Gastrocnemius medialis (tissue), 4 donors: ENCODE measurements at regions of chr2 and their contacts with region 1.

Region 1: DNA sequence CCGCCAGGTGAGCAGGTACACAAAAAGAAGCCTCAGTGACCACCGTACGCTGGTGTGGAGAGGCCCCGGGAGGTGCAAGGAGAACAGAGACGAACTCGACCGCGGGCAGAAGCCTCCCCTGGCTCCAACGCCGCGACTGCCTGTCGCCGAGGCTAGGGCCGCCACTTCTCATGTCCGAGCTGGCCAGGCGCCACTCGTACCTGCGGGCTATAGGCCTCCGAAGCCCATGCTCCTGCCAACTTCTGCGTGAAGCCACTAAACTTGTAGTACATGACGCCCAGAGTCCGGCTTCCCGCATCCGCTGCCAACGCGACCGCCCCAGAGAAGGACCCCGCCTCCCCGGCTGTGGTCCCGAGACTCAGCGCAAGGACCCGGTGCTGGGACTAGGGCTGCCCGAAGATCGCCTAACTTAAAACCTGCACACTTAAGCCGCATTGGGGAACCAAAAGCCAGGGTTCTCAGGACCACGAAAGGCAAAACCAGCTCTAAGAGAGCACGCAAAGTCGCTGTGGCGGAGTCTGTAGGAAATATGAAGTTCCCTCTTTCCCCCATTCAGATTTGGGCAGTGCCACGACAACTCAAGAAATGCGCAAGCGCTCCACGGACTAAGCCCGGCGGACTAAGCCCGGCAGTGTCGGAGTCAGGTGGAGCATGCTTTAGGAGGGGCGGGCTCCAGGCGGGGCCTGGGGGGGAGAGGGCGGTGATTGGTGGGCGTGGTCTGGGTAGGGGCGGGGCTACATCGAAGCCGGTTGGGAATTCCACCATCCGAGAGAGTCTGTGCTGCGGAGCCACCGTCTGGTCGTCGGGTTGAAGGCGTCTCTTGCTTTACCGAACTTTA is at the start of gene COX7A2L:
- DNase-seq: peak; percentile 96
- ATAC-seq: peak; percentile 95 to 97
- H3K4me3 ChIP-seq: peak within 1 kb of the TSS; percentile 86 to 99 (median 97)
- H3K27ac ChIP-seq: peak within 1 kb of the TSS; percentile 97 to 99 (median 98)
- H3K4me1 ChIP-seq: peaks cover 31 to 36% of the 10 kb centered on the region in 2 donors
- H3K27me3 ChIP-seq: no peaks in the 10 kb centered on the region
- CTCF ChIP-seq: peak in 3 of 5 experiments; percentile 3 to 58 (median 43)
- POLR2A ChIP-seq: peak; percentile 85 to 91
- total RNA-seq, gene COX7A2L: 69.8 to 94.7 (median 89.1) TPM

Region 2: DNA sequence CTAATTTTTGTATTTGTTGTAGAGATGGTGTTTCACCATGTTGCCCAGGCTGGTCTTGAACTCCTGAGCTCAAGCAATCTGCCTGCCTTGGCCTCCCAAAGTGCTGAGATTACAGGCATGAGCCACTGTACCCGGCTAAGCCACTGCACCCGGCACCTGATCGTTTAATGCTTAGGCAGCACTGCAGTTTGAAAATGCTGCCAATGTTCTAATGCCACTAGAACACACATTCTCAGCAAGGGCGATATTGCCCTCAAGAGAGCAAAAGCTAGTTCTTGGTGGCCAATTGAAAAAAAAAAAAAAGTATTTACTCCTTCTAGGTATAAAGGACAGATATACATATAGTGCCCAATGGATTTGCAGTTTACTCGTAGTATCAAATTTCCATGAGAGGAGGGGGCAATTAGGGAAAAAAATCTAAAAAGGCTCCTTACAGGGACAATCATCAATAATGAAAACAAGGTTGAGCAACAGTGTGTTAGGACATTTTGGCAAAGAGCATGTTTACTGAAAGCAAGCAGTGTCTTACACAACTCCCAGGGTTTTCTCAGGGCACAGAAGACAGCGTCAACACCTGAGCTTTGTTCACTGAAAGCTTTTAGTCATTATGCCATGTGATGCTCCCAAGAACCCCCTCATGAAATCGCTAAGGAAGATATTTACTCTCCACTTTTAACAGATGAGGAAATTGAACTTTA is 513.2 kb before region 1 on chr2:
- in situ Hi-C with region 1: loop called (anchors 10 to 25 kb)
- intact Hi-C with region 1: loop called (anchors 1 kb)
- DNase-seq: peak; percentile 76 to 82
- ATAC-seq: peak; percentile 85 to 92
- H3K4me3 ChIP-seq: no peak overlapping the region
- H3K27ac ChIP-seq: peak overlapping the region; percentile 83 to 93 (median 90)
- H3K4me1 ChIP-seq: peaks cover 23% of the 10 kb centered on the region in 2 donors
- H3K27me3 ChIP-seq: no peaks in the 10 kb centered on the region
- CTCF ChIP-seq: no peak
- POLR2A ChIP-seq: no peak

Region 3: GRCh38 chr2:41928526-41928925 is 432.6 kb before region 1 on chr2:
- in situ Hi-C with region 1: no loop called
- intact Hi-C with region 1: loop called (anchors 5 kb)
- DNase-seq: no peak
- ATAC-seq: no peak
- H3K4me3 ChIP-seq: no peak overlapping the region
- H3K27ac ChIP-seq: peak overlapping the region; percentile 89 to 98 (median 98)
- H3K4me1 ChIP-seq: peaks cover 75 to 83% of the 10 kb centered on the region in 2 donors
- H3K27me3 ChIP-seq: no peaks in the 10 kb centered on the region
- CTCF ChIP-seq: no peak
- POLR2A ChIP-seq: no peak

Region 4: GRCh38 chr2:42095923-42096408 is 265.1 kb before region 1 on chr2:
- in situ Hi-C with region 1: loop called (anchors 5 to 10 kb)
- intact Hi-C with region 1: loop called (anchors 1 kb)
- DNase-seq: peak in 1 of 2 donors; percentile 45
- ATAC-seq: peak; percentile 61 to 66
- H3K4me3 ChIP-seq: no peak overlapping the region
- H3K27ac ChIP-seq: no peak overlapping the region
- H3K4me1 ChIP-seq: no peaks in the 10 kb centered on the region
- H3K27me3 ChIP-seq: no peaks in the 10 kb centered on the region
- CTCF ChIP-seq: peak; percentile 80 to 85 (median 81)
- POLR2A ChIP-seq: no peak

Region 5: DNA sequence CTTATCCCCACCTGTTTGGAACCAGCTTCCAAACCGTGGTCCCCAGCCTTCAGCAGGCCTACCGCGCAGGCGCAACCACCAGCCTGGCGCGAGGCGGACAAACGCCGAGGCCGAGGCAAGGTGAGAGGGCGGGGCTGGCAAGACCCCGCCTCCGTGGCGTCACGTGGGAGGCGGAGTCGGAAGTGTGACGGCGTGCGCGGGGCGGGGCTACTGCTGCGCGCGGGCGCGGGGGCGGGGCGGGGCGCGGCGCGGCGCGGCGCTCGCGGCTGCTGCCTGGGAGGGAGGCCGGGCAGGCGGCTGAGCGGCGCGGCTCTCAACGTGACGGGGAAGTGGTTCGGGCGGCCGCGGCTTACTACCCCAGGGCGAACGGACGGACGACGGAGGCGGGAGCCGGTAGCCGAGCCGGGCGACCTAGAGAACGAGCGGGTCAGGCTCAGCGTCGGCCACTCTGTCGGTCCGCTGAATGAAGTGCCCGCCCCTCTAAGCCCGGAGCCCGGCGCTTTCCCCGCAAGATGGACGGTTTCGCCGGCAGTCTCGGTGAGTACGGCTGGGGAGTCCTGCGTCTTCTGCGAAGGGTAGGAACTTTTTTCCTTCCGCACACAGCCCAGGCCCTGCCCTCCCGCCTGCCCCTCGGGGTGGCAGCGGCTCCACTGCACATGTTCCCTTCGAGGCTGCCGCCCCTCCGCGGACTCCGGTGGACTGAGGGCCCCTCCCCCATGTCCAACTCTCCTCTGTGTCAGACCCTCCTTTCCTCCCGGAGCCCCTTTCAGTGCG is 191.8 kb before region 1 on chr2 and contains the start of gene EML4:
- in situ Hi-C with region 1: no loop called
- intact Hi-C with region 1: loop called (anchors 2 kb)
- DNase-seq: peak; percentile 79 to 90
- ATAC-seq: peak; percentile 96
- H3K4me3 ChIP-seq: peak within 1 kb of the TSS; percentile 73 to 92 (median 88)
- H3K27ac ChIP-seq: peak within 1 kb of the TSS; percentile 77 to 83 (median 82)
- H3K4me1 ChIP-seq: peaks cover 12 to 20% of the 10 kb centered on the region in 2 donors
- H3K27me3 ChIP-seq: no peaks in the 10 kb centered on the region
- CTCF ChIP-seq: no peak
- POLR2A ChIP-seq: peak; percentile 58 to 74
- total RNA-seq, gene EML4: 3.0 to 5.0 (median 4.6) TPM

Region 6: DNA sequence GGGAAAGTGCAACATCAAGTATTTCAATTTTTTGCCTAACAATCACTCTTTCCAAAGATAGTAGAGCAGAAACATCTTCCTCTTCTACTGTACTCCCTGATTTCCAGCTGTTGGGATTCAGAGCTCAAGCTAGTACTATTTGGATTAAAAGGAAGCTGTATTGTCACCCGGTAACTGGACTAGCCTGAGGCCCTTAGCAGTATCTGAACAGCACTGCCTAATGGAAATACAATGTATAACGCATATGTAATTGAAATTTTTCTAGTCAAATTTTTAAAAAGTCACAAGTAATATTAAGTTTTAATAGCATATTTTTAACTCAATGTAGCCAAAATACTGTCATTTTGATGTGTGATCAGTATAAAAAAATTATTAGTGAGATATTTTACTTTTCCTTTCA is 86.2 kb before region 1 on chr2:
- in situ Hi-C with region 1: no loop called
- intact Hi-C with region 1: no loop called
- DNase-seq: no peak
- ATAC-seq: no peak
- H3K4me3 ChIP-seq: no peak overlapping the region
- H3K27ac ChIP-seq: no peak overlapping the region
- H3K4me1 ChIP-seq: peaks cover 0 to 7% of the 10 kb centered on the region in 2 donors
- H3K27me3 ChIP-seq: no peaks in the 10 kb centered on the region
- CTCF ChIP-seq: no peak
- POLR2A ChIP-seq: no peak